Dorsolateral prefrontal cortex (tissue), 120 donors: ENCODE measurements at regions of chr20 and their contacts with region 1.

Region 1: GRCh38 chr20:63864847-63865640 is at the start of gene TPD52L2:
- DNase-seq: peak; percentile 96 to 100 (median 99)
- H3K4me3 ChIP-seq: peak within 1 kb of the TSS; percentile 63 to 100 (median 96)
- H3K27ac ChIP-seq: peak within 1 kb of the TSS; percentile 49 to 94 (median 84)
- H3K27me3 ChIP-seq: no peaks in the 10 kb centered on the region
- CTCF ChIP-seq: peak in 21 of 56 donors; percentile 3 to 53 (median 26)
- total RNA-seq, gene TPD52L2: 61.5 to 125 (median 76.3) TPM

Region 2: DNA sequence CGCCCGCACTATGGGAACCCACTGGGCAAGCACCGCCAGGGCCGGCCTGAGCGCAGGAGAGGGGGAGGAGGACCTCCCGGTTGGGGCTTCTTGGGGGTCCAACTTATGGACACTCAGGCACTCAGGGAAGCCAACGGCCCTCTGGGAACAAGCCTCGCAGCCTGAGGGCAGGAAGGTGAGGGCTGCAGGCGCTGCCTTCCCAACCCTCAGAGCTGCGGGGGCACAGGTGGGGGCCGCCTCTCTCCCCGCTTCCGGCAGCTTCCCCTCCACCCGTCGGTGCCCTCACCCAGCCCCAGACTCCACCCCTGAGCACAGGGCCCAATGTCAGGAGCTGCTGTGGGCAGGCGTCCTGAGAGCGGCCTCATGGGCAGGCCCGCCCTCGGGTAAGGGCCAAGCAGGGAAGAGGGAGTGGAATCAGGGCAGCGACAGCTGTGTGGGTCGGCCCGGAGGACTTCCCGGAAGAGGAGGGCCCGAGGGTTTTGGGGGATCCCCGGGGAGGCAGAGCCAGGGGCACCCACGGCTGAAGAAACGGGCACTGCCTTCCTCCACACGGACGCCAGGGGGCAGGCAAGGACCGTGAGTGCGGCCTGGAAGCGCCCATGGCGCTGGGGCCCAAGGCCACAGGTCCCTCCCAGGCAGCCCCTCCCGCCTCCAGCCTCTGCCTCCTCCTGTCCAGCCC is 327.4 kb before region 1 on chr20:
- intact Hi-C with region 1: loop called in 1 of 2 experiments (anchors 5 kb)
- DNase-seq: peak in 9 of 10 donors; percentile 61 to 86 (median 66)
- H3K4me3 ChIP-seq: peak overlapping the region in 42 of 59 donors; percentile 0 to 51 (median 29)
- H3K27ac ChIP-seq: peak overlapping the region in 6 of 59 donors; percentile 9 to 56 (median 36)
- H3K27me3 ChIP-seq: peaks cover 0 to 15% (median 0%) of the 10 kb centered on the region in 45 donors
- CTCF ChIP-seq: peak; percentile 81 to 98 (median 96)

Region 3: DNA sequence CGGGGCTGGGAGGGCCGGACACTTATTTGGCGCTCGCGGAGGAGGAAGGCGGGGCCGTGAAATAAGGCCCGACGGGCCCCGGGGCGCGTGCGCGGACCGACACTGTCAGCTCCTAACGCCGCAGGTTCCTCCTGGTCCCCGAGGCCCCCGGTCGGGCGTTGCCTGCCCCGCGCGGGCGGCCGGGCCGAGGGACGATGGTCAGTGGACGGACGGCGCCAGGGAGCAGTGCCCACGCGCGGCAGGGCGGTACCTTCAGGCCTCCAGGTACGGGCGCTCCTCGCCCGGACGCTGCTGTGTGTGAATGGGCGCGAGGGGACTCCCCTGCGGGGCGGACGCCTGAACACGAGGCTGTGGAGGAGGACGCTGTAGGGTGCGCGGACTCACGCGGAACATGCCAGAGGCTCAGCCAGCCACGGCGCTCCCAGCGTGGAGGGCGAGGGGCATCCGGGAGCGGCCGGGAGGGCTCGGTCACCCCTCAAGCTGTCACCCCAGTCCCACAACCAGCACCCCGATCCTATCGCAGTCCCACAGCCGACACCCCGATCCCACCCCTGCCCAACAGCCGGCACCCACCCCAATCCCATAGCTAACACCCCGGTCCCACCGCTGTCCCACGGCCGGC is 237.8 kb before region 1 on chr20:
- intact Hi-C with region 1: loop called in 1 of 2 experiments (anchors 5 kb)
- DNase-seq: peak; percentile 83 to 94 (median 87)
- H3K4me3 ChIP-seq: peak overlapping the region; percentile 52 to 100 (median 97)
- H3K27ac ChIP-seq: peak overlapping the region; percentile 40 to 99 (median 97)
- H3K27me3 ChIP-seq: no peaks in the 10 kb centered on the region
- CTCF ChIP-seq: peak in 4 of 56 donors; percentile 10 to 34 (median 11)

Region 4: GRCh38 chr20:63707549-63708300 is 157.3 kb before region 1 on chr20 and contains the starts of genes ARFRP1 and ZGPAT:
- intact Hi-C with region 1: loop called in 1 of 2 experiments (anchors 10 kb)
- DNase-seq: peak; percentile 88 to 97 (median 90)
- H3K4me3 ChIP-seq: peak within 1 kb of the TSS; percentile 72 to 100 (median 94)
- H3K27ac ChIP-seq: peak within 1 kb of the TSS in 55 of 59 donors; percentile 30 to 94 (median 83)
- H3K27me3 ChIP-seq: no peaks in the 10 kb centered on the region
- CTCF ChIP-seq: peak in 31 of 56 donors; percentile 5 to 59 (median 26)
- total RNA-seq, gene ARFRP1: 37.8 to 65.5 (median 48.4) TPM
- total RNA-seq, gene ZGPAT: 18.4 to 46.9 (median 28.4) TPM

Region 5: GRCh38 chr20:63782051-63782471 is 83.0 kb before region 1 on chr20:
- intact Hi-C with region 1: loop called in 1 of 2 experiments (anchors 10 kb)
- DNase-seq: no peak
- H3K4me3 ChIP-seq: no peak overlapping the region
- H3K27ac ChIP-seq: peak overlapping the region in 9 of 59 donors; percentile 5 to 84 (median 30)
- H3K27me3 ChIP-seq: no peaks in the 10 kb centered on the region
- CTCF ChIP-seq: peak in 2 of 56 donors; percentile 18 to 22

Region 6: GRCh38 chr20:63894358-63895201 is 29.5 kb after region 1 on chr20 and contains the start of gene DNAJC5:
- intact Hi-C with region 1: loop called in 1 of 2 experiments (anchors 2 kb)
- DNase-seq: peak; percentile 89 to 98 (median 94)
- H3K4me3 ChIP-seq: peak within 1 kb of the TSS; percentile 42 to 89 (median 76)
- H3K27ac ChIP-seq: peak within 1 kb of the TSS in 55 of 59 donors; percentile 13 to 90 (median 73)
- H3K27me3 ChIP-seq: no peaks in the 10 kb centered on the region
- CTCF ChIP-seq: peak in 24 of 56 donors; percentile 8 to 53 (median 28)
- total RNA-seq, gene DNAJC5: 69.5 to 175 (median 137) TPM

Region 7: DNA sequence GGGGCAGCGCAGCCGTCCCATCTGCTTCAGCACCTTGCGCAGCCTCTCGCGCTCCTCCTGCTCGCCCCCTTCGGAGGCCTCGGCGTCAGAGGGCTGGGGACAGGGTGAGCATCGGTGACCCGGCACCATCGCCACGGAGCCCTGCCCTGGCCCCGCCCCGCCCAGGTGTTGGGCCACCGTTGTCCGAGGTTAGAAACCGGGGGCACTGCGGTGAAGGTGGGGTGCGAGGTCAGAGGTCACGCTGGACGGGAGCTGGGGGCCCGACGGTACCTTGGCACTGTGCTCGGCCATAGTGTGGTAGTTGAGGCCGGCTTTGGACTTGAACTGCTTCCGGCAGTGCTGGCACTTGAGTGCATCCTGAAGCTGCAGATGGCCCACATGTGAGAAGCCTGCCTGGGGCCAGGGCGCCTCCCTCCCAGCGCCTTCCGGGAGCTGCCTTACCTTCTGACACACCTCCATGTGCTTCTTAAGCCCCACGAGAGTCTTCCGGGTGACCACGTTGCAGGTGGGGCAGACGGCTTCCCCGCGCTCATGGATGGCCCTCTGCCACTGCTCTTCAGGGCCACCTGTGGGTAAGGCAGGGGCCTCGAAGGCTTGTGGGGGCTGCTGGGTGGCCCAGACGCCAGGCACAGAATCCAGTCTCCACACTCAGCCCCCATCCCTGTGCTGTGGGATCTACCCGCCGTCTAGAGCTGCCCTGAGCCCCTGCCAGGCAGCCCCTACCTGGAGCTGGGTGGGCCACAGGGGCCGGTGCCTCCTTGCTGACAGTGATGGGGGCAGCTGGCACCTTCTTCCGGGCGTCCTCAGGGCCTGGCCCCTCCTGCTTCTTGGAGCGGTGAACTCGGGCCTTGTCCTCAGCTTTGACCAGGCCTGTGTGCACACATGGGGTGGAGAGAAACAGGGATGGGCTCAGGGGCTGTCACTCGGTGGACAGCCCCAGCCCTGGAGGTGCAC is 98.6 kb after region 1 on chr20:
- intact Hi-C with region 1: no loop called
- DNase-seq: peak in 1 of 10 donors; percentile 29
- H3K4me3 ChIP-seq: no peak overlapping the region
- H3K27ac ChIP-seq: no peak overlapping the region
- H3K27me3 ChIP-seq: no peaks in the 10 kb centered on the region
- CTCF ChIP-seq: no peak

Region 8: DNA sequence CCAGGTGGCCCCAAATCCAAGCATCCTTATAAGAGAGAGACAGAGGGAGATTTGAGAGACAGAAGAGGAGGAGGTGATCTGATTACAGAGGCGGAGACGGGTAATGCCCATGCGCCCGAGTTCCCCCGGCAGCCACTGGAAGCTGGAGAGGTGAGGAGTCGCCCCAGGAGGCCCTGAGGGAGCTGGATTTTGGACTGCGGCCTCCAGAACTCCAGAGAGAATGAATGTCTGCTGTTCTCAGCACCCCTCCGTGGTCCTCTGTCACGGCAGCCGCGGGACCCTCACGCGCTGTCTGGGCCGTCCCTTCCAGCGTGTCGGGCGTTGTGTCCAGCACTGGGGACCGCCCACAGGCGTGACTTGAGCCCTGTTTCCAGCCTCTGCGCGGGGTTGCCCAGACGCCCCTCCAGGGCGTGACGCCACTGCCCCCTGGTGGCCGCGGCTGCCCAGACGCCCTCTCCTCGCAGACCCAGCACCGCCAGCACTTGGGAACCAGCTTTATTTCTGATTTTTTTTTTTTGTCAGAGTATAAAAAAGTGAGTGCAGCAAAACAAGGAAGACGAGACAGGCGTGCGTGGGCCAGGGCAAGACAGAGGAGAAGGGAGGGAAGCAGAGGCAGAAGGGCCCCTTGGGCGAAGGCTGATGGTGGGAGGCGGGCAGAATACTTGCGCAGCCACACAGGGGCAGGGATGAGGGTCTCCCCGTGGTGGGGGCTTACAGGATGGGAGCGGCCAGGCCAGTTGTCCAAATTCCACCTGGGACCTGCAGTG is 108.8 kb after region 1 on chr20:
- intact Hi-C with region 1: loop called in 1 of 2 experiments (anchors 10 kb)
- DNase-seq: peak; percentile 67 to 92 (median 86)
- H3K4me3 ChIP-seq: peak overlapping the region in 55 of 59 donors; percentile 7 to 63 (median 38)
- H3K27ac ChIP-seq: peak overlapping the region in 53 of 59 donors; percentile 6 to 88 (median 61)
- H3K27me3 ChIP-seq: peaks cover 0 to 13% (median 0%) of the 10 kb centered on the region in 45 donors
- CTCF ChIP-seq: peak; percentile 90 to 100 (median 98)